ENCODE measurements at regions of chr5 and their contacts with region 1.

Region 1: DNA sequence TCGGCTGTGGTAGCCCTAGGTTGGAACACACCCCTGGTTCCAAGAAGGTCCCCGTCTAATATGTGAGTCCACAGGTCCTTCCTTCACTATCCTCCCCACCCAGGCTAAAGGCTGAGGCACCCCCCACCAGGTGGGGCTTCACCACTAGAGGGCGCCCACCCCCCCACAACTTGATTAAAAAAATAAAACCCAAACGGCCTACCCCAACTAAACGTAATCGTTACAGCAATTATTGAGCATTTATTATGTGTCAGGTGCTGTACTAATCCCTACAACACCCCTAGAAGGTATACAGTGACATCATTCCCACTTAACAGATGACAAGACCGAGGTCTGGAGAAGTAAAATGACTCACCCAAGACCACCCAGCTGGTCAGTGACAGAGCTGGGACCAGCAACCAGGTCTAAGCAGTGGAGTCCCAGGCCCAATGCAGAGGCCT is 65.0 kb downstream of the FGF18 start:
- DNase-seq: peak; percentile 44
- ATAC-seq: peak; percentile 67
- H3K4me3 Mint-ChIP-seq: no peak overlapping the region
- H3K27ac Mint-ChIP-seq: no peak overlapping the region
- H3K4me1 Mint-ChIP-seq: peaks cover 17% of the 10 kb centered on the region
- H3K27me3 Mint-ChIP-seq: no peaks in the 10 kb centered on the region
- CTCF ChIP-seq: peak; percentile 73

Region 2: DNA sequence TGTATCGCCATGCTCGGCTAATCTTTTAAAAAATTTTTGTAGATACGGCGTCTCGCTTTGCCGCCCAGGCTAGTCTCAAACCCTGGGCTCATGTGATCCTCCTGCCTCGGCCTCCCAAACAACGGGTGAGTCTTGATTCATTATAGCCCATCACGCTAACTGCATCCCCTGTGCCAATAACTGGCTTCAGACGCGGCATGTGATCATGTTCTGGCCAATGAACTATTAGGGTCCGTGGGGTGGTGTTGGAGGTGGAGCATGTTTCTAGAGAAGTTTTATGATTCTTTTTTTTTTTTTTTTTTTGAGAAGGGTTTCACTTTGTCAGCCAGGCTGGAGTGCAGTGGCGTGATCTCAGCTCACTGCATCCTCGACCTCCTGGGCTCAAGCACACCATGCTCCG is 14.1 kb before region 1 on chr5:
- CTCF ChIA-PET with region 1: interaction called, 10 read pairs
- POLR2A ChIA-PET with region 1: no interaction called
- DNase-seq: no peak
- ATAC-seq: no peak
- H3K4me3 Mint-ChIP-seq: no peak overlapping the region
- H3K27ac Mint-ChIP-seq: no peak overlapping the region
- H3K4me1 Mint-ChIP-seq: peaks cover 9% of the 10 kb centered on the region
- H3K27me3 Mint-ChIP-seq: no peaks in the 10 kb centered on the region
- CTCF ChIP-seq: no peak

Region 3: DNA sequence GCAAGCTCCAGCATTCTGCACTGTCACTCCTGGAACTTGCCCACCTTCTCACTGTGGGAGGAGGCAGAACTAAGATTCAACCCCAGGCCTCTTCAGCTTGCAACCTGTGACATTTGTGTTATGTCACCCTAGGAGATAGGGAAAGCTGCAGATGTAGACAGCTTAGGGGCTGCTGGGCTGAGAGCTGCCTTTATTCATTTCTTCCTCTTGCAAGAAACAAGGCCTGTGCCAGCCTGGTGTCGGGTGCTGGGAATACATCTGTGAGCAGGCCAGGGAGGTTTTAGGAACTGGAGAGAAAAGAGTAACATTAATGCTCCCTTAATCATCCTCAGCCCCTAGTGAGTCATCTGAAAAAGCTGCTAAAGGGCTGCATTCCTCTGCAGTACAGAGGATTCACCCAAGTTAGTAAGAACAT is 36.7 kb after region 1 on chr5:
- CTCF ChIA-PET with region 1: interaction called, 14 read pairs
- POLR2A ChIA-PET with region 1: no interaction called
- DNase-seq: no peak
- ATAC-seq: peak; percentile 12
- H3K4me3 Mint-ChIP-seq: no peak overlapping the region
- H3K27ac Mint-ChIP-seq: peak overlapping the region; percentile 56; the same call in 1 of the 2 replicates
- H3K4me1 Mint-ChIP-seq: peaks cover 67% of the 10 kb centered on the region
- H3K27me3 Mint-ChIP-seq: peaks cover 25% of the 10 kb centered on the region
- CTCF ChIP-seq: no peak

Measured in WTC11 (cell line).